ENCODE measurements at regions of chr17 and their contacts with region 1.

Region 1: GRCh38 chr17:7606280-7606679 is 8.4 kb downstream of the FXR2 start:
- DNase-seq: no peak
- H3K4me3 ChIP-seq: no peak overlapping the region
- H3K27ac ChIP-seq: no peak overlapping the region
- H3K4me1 ChIP-seq: no peaks in the 10 kb centered on the region
- H3K27me3 ChIP-seq: no peaks in the 10 kb centered on the region

Region 2: DNA sequence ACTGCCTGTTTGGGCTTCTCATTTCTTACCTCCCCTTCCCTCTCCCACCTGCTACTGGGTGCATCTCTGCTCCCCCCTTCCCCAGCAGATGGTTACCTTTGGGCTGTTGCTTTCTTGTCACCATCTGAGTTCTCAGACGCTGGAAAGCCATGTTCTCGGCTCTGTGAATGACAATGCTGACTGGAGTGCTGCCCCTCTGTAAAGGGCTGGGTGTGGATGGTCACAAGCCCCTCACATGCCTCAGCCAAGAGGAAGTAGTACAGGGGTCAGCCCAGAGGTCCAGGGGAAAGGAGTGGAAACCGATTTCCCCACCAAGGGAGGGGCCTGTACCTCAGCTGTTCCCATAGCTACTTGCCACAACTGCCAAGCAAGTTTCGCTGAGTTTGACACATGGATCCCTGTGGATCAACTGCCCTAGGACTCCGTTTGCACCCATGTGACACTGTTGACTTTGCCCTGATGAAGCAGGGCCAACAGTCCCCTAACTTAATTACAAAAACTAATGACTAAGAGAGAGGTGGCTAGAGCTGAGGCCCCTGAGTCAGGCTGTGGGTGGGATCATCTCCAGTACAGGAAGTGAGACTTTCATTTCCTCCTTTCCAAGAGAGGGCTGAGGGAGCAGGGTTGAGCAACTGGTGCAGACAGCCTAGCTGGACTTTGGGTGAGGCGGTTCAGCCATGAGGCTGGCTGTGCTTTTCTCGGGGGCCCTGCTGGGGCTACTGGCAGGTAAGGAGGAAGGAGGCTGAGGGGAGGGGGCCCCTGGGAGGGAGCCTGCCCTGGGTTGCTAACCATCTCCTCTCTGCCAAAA is 27.1 kb before region 1 on chr17 and contains the start of gene CD68:
- CTCF ChIA-PET with region 1: no interaction called
- POLR2A ChIA-PET with region 1: no interaction called
- DNase-seq: peak; percentile 74 to 90 (median 87)
- H3K4me3 ChIP-seq: peak within 1 kb of the TSS in 4 of 7 experiments; percentile 26 to 39 (median 33)
- H3K27ac ChIP-seq: peak within 1 kb of the TSS; percentile 50 to 73
- H3K4me1 ChIP-seq: peaks cover 14 to 91% (median 77%) of the 10 kb centered on the region in 4 experiments
- H3K27me3 ChIP-seq: no peaks in the 10 kb centered on the region

Region 3: GRCh38 chr17:7589204-7589868 is 16.9 kb before region 1 on chr17:
- CTCF ChIA-PET with region 1: interaction called, 22 read pairs
- POLR2A ChIA-PET with region 1: interaction called, 4 read pairs
- DNase-seq: peak; percentile 77 to 87 (median 78)
- H3K4me3 ChIP-seq: peak overlapping the region in 2 of 7 experiments; percentile 28 to 40
- H3K27ac ChIP-seq: no peak overlapping the region
- H3K4me1 ChIP-seq: peaks cover 0 to 30% (median 18%) of the 10 kb centered on the region in 4 experiments
- H3K27me3 ChIP-seq: no peaks in the 10 kb centered on the region

Region 4: GRCh38 chr17:7673239-7673638 is 67.0 kb after region 1 on chr17:
- CTCF ChIA-PET with region 1: no interaction called
- POLR2A ChIA-PET with region 1: no interaction called
- DNase-seq: peak; percentile 16 to 65 (median 40)
- H3K4me3 ChIP-seq: no peak overlapping the region
- H3K27ac ChIP-seq: no peak overlapping the region
- H3K4me1 ChIP-seq: no peaks in the 10 kb centered on the region
- H3K27me3 ChIP-seq: no peaks in the 10 kb centered on the region